ENCODE measurements at regions of chr16 and their contacts with region 1.

Region 1: GRCh38 chr16:67017810-67018488 is 11.0 kb upstream of the CBFB start:
- DNase-seq: peak; percentile 78 to 96
- H3K4me3 ChIP-seq: no peak overlapping the region
- H3K27ac ChIP-seq: no peak overlapping the region
- H3K4me1 ChIP-seq: peaks cover 0 to 6% (median 4%) of the 10 kb centered on the region in 4 experiments; a peak in 4 of 7 replicates
- H3K27me3 ChIP-seq: peaks cover 16 to 35% (median 26%) of the 10 kb centered on the region in 4 experiments
- CTCF ChIP-seq: peak; percentile 82 to 99 (median 89)
- EP300 ChIP-seq: no peak
- POLR2A ChIP-seq: no peak
- RAD21 ChIP-seq: peak; percentile 89 to 91

Region 2: DNA sequence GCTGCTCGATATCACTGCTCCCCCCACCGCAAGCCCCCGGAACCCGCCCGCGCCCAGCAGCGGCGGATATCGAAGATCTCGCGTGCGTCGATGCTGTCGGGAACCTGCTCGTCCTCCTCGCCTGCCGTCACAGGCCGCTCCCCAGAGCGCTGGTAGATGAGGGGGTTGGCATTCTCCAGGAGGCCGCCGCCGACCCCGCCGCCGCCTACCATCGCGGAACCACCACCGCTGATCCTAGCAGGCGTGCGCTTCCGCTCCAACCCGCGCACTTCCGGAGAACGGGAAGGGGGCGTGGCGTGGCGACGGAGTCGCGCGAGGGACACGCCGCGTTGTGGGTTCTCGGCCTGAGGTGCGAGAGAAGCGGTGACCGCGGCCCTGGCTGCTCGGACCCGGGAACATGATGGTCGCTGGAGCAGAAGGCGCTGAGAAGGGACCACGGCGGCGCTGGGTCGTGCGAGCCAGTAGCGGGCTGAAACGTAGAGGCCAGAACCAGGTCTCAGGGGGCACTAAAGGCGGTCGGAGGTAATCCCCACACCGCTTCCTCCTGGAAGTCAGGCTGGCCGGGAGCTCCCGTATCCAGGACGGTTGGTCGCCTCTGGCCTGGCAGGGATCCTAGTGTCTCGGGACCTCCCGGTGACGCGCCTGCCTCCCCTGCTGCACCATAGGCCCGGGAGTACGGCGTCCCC is 83.7 kb before region 1 on chr16 and contains the start of gene CIAO2B:
- CTCF ChIA-PET with region 1: no interaction called
- POLR2A ChIA-PET with region 1: no interaction called
- DNase-seq: peak in 1 of 2 experiments; percentile 83
- H3K4me3 ChIP-seq: peak within 1 kb of the TSS; percentile 79 to 92 (median 90)
- H3K27ac ChIP-seq: no peak within 1 kb of the TSS
- H3K4me1 ChIP-seq: peaks cover 0 to 9% (median 5%) of the 10 kb centered on the region in 4 experiments; a peak in 4 of 7 replicates
- H3K27me3 ChIP-seq: peaks cover 0 to 9% (median 6%) of the 10 kb centered on the region in 4 experiments; a peak in 4 of 7 replicates
- CTCF ChIP-seq: no peak
- EP300 ChIP-seq: no peak
- POLR2A ChIP-seq: peak in 1 of 2 experiments; percentile 51; a peak in 2 of 3 replicates
- RAD21 ChIP-seq: no peak
- total RNA-seq, gene CIAO2B: 65.6 and 71.3 TPM in 2 replicates

Region 3: GRCh38 chr16:66961065-66961744 is 56.7 kb before region 1 on chr16 and contains the start of gene CES3:
- CTCF ChIA-PET with region 1: interaction called, 61 read pairs
- POLR2A ChIA-PET with region 1: no interaction called
- DNase-seq: peak; percentile 79 to 87
- H3K4me3 ChIP-seq: peak within 1 kb of the TSS; percentile 8 to 50 (median 24); a peak in 6 of 8 replicates
- H3K27ac ChIP-seq: no peak within 1 kb of the TSS
- H3K4me1 ChIP-seq: peaks cover 0 to 3% (median under 1%) of the 10 kb centered on the region in 4 experiments; a peak in 3 of 7 replicates
- H3K27me3 ChIP-seq: no peaks in the 10 kb centered on the region
- CTCF ChIP-seq: peak; percentile 97 to 99 (median 99)
- EP300 ChIP-seq: no peak
- POLR2A ChIP-seq: peak in 1 of 2 experiments; percentile 37; a peak in 1 of 3 replicates
- RAD21 ChIP-seq: peak; percentile 33 to 48; a peak in 3 of 4 replicates
- total RNA-seq, gene CES3: 1.6 and 1.7 TPM in 2 replicates

Region 4: GRCh38 chr16:66988197-66988788 is 29.7 kb before region 1 on chr16 and contains the start of gene CES4A:
- CTCF ChIA-PET with region 1: interaction called, 19 read pairs
- POLR2A ChIA-PET with region 1: interaction called, 5 read pairs
- DNase-seq: no peak
- H3K4me3 ChIP-seq: no peak within 1 kb of the TSS
- H3K27ac ChIP-seq: no peak within 1 kb of the TSS
- H3K4me1 ChIP-seq: no peaks in the 10 kb centered on the region
- H3K27me3 ChIP-seq: peaks cover 0 to 3% (median 2%) of the 10 kb centered on the region in 4 experiments; a peak in 3 of 7 replicates
- CTCF ChIP-seq: no peak
- EP300 ChIP-seq: no peak
- POLR2A ChIP-seq: no peak
- RAD21 ChIP-seq: no peak
- total RNA-seq, gene CES4A: 0.93 TPM in 1 of 2 replicates, not detected in the other

Region 5: GRCh38 chr16:67104061-67104460 is 86.1 kb after region 1 on chr16:
- CTCF ChIA-PET with region 1: interaction called, 164 read pairs
- POLR2A ChIA-PET with region 1: interaction called, 4 read pairs
- DNase-seq: peak in 1 of 2 experiments; percentile 64
- H3K4me3 ChIP-seq: no peak overlapping the region
- H3K27ac ChIP-seq: no peak overlapping the region
- H3K4me1 ChIP-seq: peaks cover 0 to 2% (median under 1%) of the 10 kb centered on the region in 4 experiments; a peak in 3 of 7 replicates
- H3K27me3 ChIP-seq: peaks cover 0 to 4% (median 1%) of the 10 kb centered on the region in 4 experiments; a peak in 2 of 7 replicates
- CTCF ChIP-seq: peak; percentile 64 to 84 (median 64)
- EP300 ChIP-seq: no peak
- POLR2A ChIP-seq: no peak
- RAD21 ChIP-seq: peak; percentile 21 to 40

Region 6: DNA sequence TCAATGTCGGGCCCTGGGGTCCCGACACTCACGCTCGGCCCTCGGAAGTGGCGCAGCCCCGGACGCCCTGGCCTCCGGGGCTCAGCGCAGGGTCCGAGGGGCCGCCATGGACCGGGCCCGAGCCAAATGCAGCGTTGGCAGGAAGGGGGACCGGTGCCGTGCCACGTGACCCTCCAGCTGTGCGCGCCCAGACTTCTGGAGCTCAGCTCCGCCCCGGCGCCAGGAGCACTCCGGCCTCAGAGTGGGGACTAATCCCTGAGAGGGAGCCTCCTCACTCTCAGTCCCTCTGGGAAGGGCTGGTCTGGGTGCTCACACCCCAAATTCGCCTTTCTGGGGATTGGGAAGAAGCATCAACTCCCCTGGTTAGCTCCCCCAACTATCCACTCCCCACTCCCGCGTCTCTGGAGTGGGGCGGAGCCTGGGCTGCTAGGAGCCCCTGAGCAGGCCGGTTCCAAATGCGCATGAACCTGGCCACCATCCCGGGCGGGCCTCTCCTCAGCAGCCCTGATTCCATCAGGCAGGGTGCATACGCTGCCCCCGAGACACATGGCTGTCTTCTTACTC is 133.0 kb after region 1 on chr16 and contains the start of gene B3GNT9:
- CTCF ChIA-PET with region 1: interaction called, 80 read pairs
- POLR2A ChIA-PET with region 1: no interaction called
- DNase-seq: peak in 1 of 2 experiments; percentile 88
- H3K4me3 ChIP-seq: peak within 1 kb of the TSS; percentile 62 to 75 (median 72)
- H3K27ac ChIP-seq: no peak within 1 kb of the TSS
- H3K4me1 ChIP-seq: peaks cover 0 to 13% (median 9%) of the 10 kb centered on the region in 4 experiments; a peak in 5 of 7 replicates
- H3K27me3 ChIP-seq: peaks cover 34 to 56% (median 47%) of the 10 kb centered on the region in 4 experiments
- CTCF ChIP-seq: no peak
- EP300 ChIP-seq: no peak
- POLR2A ChIP-seq: no peak
- RAD21 ChIP-seq: no peak
- total RNA-seq, gene B3GNT9: 3.5 and 4.7 TPM in 2 replicates

Region 7: DNA sequence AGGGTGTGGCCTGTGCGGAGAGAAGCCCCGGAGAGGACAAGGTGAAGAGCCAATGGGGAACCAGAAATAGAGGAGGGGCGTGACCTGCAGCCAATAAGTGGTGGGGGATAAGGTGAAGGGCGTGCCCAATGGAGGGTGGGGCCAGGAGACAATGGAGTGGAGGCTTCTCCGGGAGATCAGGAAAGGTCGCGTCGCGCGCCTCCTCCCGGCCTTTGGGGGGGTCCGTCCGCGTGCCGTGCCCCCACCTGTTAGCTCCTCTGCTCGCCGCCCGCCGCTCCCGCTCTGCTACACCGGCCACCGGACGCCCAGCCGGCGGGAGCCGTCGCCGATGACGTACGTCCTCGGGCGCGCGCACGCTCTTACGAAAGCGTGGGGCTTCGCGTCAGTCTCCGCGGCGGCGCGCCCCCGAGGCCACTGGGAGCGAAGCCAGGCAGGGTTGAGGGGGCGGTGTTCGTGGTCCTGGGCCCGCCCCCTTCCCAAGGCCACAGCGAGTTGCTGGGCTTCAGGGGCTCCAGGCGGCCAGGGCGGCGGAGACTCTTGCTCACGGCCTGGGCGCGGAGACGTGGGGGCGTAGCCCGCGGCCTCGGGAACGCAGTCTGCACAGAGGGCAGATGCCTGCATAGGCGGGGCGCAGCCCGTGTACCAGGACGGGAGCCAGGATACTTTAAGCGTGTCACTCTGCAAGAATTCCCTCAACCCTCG is 165.8 kb after region 1 on chr16 and contains the start of gene MATCAP1:
- CTCF ChIA-PET with region 1: interaction called, 11 read pairs
- POLR2A ChIA-PET with region 1: interaction called, 7 read pairs
- DNase-seq: peak; percentile 87 to 95
- H3K4me3 ChIP-seq: peak within 1 kb of the TSS; percentile 73 to 90 (median 85)
- H3K27ac ChIP-seq: peak within 1 kb of the TSS; percentile 98
- H3K4me1 ChIP-seq: peaks cover 0 to 19% (median 12%) of the 10 kb centered on the region in 4 experiments; a peak in 5 of 7 replicates
- H3K27me3 ChIP-seq: peaks cover 8 to 35% (median 21%) of the 10 kb centered on the region in 4 experiments
- CTCF ChIP-seq: no peak
- EP300 ChIP-seq: no peak
- POLR2A ChIP-seq: peak in 1 of 2 experiments; percentile 79; a peak in 2 of 3 replicates
- RAD21 ChIP-seq: no peak
- total RNA-seq, gene MATCAP1: 22.9 and 23.1 TPM in 2 replicates

Region 8: GRCh38 chr16:67685388-67686112 is 667.6 kb after region 1 on chr16:
- CTCF ChIA-PET with region 1: no interaction called
- POLR2A ChIA-PET with region 1: no interaction called
- DNase-seq: no peak
- H3K4me3 ChIP-seq: no peak overlapping the region
- H3K27ac ChIP-seq: no peak overlapping the region
- H3K4me1 ChIP-seq: no peaks in the 10 kb centered on the region
- H3K27me3 ChIP-seq: no peaks in the 10 kb centered on the region
- CTCF ChIP-seq: no peak
- EP300 ChIP-seq: no peak
- POLR2A ChIP-seq: no peak
- RAD21 ChIP-seq: no peak

Measured in H1 (cell line).